CD8-positive, alpha-beta T cell (primary cell): ENCODE measurements at regions of chr11 and their contacts with region 1.

Region 1: GRCh38 chr11:88016392-88017170 is 158.7 kb downstream of the RAB38 start:
- DNase-seq: peak in 8 of 9 experiments; percentile 17 to 73 (median 52)
- ATAC-seq: peak; percentile 40
- H3K4me3 ChIP-seq: no peak overlapping the region
- H3K4me3 Mint-ChIP-seq: no peak overlapping the region
- H3K27ac ChIP-seq: no peak overlapping the region
- H3K27ac Mint-ChIP-seq: no peak overlapping the region
- H3K4me1 ChIP-seq: no peaks in the 10 kb centered on the region
- H3K4me1 Mint-ChIP-seq: no peaks in the 10 kb centered on the region
- H3K27me3 ChIP-seq: no peaks in the 10 kb centered on the region
- H3K27me3 Mint-ChIP-seq: no peaks in the 10 kb centered on the region
- CTCF ChIP-seq: peak; percentile 66

Region 2: DNA sequence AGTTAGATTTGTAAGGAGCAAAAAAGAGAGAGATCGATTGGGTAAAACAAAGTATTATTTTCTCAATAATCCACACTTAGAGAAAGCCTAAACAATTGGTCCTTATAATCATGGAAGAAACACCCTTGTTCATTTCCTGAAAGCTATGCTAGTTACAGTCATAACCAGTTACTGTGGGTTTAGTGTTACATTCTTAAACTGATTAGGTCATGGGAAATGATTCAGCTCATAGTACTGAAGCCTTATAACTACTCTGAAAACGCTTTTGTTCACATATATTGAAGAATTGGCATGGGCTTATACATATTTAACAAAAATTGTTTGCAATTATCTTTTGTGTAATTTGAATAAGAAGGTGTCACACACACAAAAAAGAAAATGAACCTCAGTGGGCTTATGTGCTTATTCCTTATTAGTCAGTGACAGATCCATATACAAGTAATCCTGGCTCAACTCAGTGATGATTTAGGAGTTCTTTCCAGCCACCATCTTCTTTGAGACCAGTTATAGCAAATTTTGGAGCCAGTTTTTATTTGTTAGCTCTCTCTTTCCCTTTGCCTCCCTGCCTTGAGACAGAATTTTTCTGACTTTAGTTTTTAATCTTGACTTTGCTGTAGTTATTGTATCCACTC is 519.5 kb after region 1 on chr11:
- CTCF ChIA-PET with region 1: interaction called, 68 read pairs
- POLR2A ChIA-PET with region 1: no interaction called
- intact Hi-C with region 1: no loop called
- DNase-seq: no peak
- ATAC-seq: no peak
- H3K4me3 ChIP-seq: no peak overlapping the region
- H3K4me3 Mint-ChIP-seq: no peak overlapping the region
- H3K27ac ChIP-seq: no peak overlapping the region
- H3K27ac Mint-ChIP-seq: no peak overlapping the region
- H3K4me1 ChIP-seq: no peaks in the 10 kb centered on the region
- H3K4me1 Mint-ChIP-seq: no peaks in the 10 kb centered on the region
- H3K27me3 ChIP-seq: no peaks in the 10 kb centered on the region
- H3K27me3 Mint-ChIP-seq: peaks cover 3% of the 10 kb centered on the region
- CTCF ChIP-seq: no peak